A549 (cell line): ENCODE measurements at regions of chr3 and their contacts with region 1.

Region 1: GRCh38 chr3:48439820-48440589 is at the starts of genes CCDC51 and TMA7:
- DNase-seq: peak; percentile 95 to 97
- ATAC-seq: peak; percentile 93 to 97
- H3K4me3 ChIP-seq: peak within 1 kb of the TSS; percentile 59
- H3K27ac ChIP-seq: peak within 1 kb of the TSS; percentile 86 to 96
- H3K4me1 ChIP-seq: peaks cover 16% of the 10 kb centered on the region
- CTCF ChIP-seq: no peak
- EP300 ChIP-seq: no peak
- POLR2A ChIP-seq: peak; percentile 52
- RAD21 ChIP-seq: no peak
- polyA plus RNA-seq, gene CCDC51: 19.8 and 22.9 TPM in 2 replicates
- polyA plus RNA-seq, gene TMA7: 139 and 303 TPM in 2 replicates

Region 2: GRCh38 chr3:48151058-48151806 is 288.8 kb before region 1 on chr3:
- CTCF ChIA-PET with region 1: no interaction called
- POLR2A ChIA-PET with region 1: no interaction called
- DNase-seq: peak; percentile 62 to 80
- ATAC-seq: peak; percentile 96 to 99
- H3K4me3 ChIP-seq: no peak overlapping the region
- H3K27ac ChIP-seq: peak overlapping the region in 1 of 2 experiments; percentile 37; a peak in 1 of 6 replicates
- H3K4me1 ChIP-seq: peaks cover 25% of the 10 kb centered on the region
- CTCF ChIP-seq: peak; percentile 70
- EP300 ChIP-seq: no peak
- POLR2A ChIP-seq: no peak
- RAD21 ChIP-seq: peak; percentile 87 to 94

Region 3: GRCh38 chr3:48232734-48233133 is 207.3 kb before region 1 on chr3:
- CTCF ChIA-PET with region 1: interaction called, 33 read pairs
- POLR2A ChIA-PET with region 1: no interaction called
- DNase-seq: peak; percentile 62 to 71
- ATAC-seq: peak; percentile 99 to 100
- H3K4me3 ChIP-seq: 0 out of 3 replicates have a peak overlapping the region, but pooled peaks have one; percentile 21
- H3K27ac ChIP-seq: peak overlapping the region; percentile 43 to 64; a peak in 4 of 6 replicates
- H3K4me1 ChIP-seq: no peaks in the 10 kb centered on the region
- CTCF ChIP-seq: peak; percentile 51
- EP300 ChIP-seq: no peak
- POLR2A ChIP-seq: no peak; the same call in 1 of the 2 replicates
- RAD21 ChIP-seq: peak; percentile 44 to 67; a peak in 4 of 5 replicates

Region 4: DNA sequence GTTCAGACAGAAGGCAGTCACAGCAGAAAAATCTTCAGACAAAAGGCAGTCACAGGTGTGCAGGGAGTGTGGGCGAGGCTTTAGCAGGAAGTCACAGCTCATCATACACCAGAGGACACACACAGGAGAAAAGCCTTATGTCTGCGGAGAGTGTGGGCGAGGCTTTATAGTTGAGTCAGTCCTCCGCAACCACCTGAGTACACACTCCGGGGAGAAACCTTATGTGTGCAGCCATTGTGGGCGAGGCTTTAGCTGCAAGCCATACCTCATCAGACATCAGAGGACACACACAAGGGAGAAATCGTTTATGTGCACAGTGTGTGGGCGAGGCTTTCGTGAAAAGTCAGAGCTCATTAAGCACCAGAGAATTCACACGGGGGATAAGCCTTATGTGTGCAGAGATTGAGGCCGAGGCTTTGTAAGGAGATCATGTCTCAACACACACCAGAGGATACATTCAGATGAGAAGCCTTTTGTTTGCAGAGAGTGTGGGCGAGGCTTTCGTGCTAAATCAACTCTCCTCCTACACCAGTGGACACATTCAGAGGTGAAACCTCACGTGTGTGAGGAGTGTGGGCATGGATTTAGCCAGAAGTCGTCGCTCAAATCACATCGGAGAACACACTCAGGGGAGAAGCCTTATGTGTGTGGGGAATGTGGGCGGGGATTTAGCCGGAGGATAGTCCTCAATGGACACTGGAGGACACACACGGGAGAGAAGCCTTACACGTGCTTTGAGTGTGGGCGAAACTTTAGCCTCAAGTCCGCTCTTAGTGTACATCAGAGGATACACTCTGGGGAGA is 171.4 kb before region 1 on chr3:
- CTCF ChIA-PET with region 1: interaction called, 270 read pairs
- POLR2A ChIA-PET with region 1: interaction called, 4 read pairs
- DNase-seq: no peak
- ATAC-seq: no peak
- H3K4me3 ChIP-seq: no peak overlapping the region
- H3K27ac ChIP-seq: no peak overlapping the region
- H3K4me1 ChIP-seq: no peaks in the 10 kb centered on the region
- CTCF ChIP-seq: no peak
- EP300 ChIP-seq: no peak
- POLR2A ChIP-seq: no peak
- RAD21 ChIP-seq: no peak

Region 5: DNA sequence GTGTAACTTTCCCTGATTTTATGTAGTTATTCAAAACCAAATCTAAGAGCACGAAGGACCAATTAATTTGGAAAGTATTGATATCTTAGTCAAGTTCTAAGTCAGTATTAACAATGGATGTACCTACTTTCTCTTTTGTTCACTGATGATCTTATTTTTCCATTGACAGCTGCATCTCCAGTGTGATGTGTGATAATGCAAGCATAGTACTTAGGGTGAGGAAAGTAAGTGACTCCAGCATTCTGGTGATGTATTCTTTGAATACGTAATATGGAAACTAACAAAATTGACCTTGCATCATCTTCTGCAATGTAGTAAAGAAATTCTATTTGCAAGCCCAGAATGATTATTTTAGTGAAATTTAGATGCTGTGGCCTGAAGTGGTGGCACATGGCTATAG is 45.6 kb before region 1 on chr3:
- CTCF ChIA-PET with region 1: interaction called, 488 read pairs
- POLR2A ChIA-PET with region 1: no interaction called
- DNase-seq: no peak
- ATAC-seq: no peak
- H3K4me3 ChIP-seq: no peak overlapping the region
- H3K27ac ChIP-seq: no peak overlapping the region
- H3K4me1 ChIP-seq: no peaks in the 10 kb centered on the region
- CTCF ChIP-seq: no peak
- EP300 ChIP-seq: no peak
- POLR2A ChIP-seq: no peak
- RAD21 ChIP-seq: no peak

Region 6: DNA sequence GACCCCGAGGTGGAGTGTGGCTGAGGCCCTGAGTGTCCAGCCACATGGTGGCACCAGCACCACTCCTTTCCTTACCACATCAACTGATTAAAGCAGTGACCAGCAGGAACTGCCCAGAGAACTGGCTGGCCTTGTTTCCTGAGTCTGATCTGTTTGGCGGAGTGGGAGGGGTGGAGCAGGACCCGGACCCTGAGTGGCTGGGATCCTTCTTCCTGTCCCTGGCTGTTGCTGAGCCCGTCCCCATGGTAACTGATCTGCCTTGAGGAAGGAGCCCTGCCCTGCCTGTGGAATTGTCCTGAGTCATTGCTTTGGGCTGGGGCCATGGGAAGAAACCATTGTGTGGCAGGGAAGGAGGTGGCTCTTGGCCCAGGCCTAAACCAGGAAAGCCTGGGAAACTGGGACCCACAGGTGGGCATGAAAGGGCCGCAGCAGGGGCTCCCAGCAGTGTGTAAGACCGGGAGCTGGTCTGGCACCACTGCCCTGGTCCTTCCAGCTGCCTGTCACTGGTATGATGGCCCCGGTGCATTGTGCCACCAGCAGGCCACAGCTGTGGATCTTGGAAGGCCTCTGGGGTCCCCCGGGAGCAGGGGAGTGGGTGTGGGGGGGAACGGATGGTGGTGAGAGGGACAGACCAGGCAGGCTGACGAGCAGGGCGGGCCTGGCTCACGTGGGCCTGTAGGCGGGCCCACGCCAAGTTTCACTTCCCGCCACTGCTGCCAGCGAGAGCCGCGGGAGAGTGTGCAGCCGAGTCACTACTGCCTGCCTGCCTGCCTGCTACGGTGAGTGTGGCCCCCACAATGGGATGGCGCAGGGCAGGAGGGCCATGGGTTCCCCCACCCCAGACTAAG is 25.8 kb after region 1 on chr3:
- CTCF ChIA-PET with region 1: interaction called, 15 read pairs
- POLR2A ChIA-PET with region 1: no interaction called
- DNase-seq: peak; percentile 97 to 98
- ATAC-seq: peak; percentile 90 to 93
- H3K4me3 ChIP-seq: peak overlapping the region; percentile 37
- H3K27ac ChIP-seq: peak overlapping the region; percentile 96 to 99
- H3K4me1 ChIP-seq: peaks cover 52% of the 10 kb centered on the region
- CTCF ChIP-seq: peak; percentile 60
- EP300 ChIP-seq: no peak
- POLR2A ChIP-seq: peak; percentile 58
- RAD21 ChIP-seq: peak; percentile 75

Region 7: DNA sequence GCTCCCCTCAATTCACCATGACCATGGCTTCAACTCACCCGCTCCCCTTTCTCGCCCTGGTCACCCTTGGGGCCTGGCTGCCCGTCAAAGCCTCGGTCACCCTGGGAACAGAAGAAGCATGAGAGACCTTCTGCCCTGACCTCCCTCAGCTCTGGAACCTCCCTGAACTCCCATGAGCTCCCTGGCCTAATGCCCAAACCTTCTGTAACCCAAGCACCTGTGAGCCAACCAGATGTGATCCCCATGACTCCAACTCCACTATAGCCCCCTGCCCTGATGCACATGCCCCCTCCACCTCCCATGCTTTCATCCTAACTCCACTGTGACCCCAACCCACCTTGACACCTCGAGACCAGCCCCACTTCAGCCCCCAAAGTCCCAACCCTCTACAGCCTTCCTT is 127.1 kb after region 1 on chr3:
- CTCF ChIA-PET with region 1: no interaction called
- POLR2A ChIA-PET with region 1: no interaction called
- DNase-seq: no peak
- ATAC-seq: no peak
- H3K4me3 ChIP-seq: no peak overlapping the region
- H3K27ac ChIP-seq: peak overlapping the region; percentile 24 to 89; a peak in 4 of 6 replicates
- H3K4me1 ChIP-seq: peaks cover 67% of the 10 kb centered on the region
- CTCF ChIP-seq: no peak
- EP300 ChIP-seq: no peak
- POLR2A ChIP-seq: no peak
- RAD21 ChIP-seq: no peak